Left colon (tissue), 2 donors: ENCODE measurements at regions of chr7 and their contacts with region 1.

Region 1: GRCh38 chr7:111741811-111742240 is 179.5 kb upstream of the IMMP2L start:
- DNase-seq: peak; percentile 41 to 63
- ATAC-seq: peak; percentile 92

Region 2: DNA sequence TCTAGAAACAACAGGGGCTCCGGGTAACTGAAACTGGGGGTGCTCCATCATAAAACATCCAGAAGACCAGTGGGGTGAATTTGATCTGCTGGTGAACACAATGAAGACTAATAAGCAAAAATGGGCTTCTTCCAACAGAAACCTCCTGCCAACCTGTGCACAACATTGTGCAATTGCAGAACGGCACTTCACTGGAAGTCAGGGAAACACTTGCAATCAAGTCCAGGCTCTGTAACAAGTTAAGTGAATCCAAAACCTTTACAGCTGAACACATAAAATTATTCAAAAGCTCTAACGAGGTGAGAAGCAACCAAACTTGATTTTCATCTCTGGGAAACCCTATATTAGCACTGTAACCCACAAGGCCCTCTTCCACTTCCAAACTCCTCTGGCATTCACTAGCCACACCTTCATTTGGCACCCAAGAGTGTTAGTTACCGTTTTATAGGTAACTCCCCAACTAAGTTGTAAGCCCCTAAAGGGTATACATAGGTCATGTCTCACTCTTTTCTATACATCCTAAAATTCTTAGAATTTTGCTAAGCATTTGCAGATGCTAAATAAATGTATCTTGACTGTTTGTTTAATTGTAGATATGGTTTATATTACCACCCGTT is 201.5 kb before region 1 on chr7:
- intact Hi-C with region 1: no loop called
- DNase-seq: no peak
- ATAC-seq: no peak

Region 3: GRCh38 chr7:111855161-111855856 is 113.5 kb after region 1 on chr7:
- intact Hi-C with region 1: loop called in 1 of 2 experiments (anchors 10 kb)
- DNase-seq: peak; percentile 56 to 64
- ATAC-seq: peak; percentile 91

Region 4: DNA sequence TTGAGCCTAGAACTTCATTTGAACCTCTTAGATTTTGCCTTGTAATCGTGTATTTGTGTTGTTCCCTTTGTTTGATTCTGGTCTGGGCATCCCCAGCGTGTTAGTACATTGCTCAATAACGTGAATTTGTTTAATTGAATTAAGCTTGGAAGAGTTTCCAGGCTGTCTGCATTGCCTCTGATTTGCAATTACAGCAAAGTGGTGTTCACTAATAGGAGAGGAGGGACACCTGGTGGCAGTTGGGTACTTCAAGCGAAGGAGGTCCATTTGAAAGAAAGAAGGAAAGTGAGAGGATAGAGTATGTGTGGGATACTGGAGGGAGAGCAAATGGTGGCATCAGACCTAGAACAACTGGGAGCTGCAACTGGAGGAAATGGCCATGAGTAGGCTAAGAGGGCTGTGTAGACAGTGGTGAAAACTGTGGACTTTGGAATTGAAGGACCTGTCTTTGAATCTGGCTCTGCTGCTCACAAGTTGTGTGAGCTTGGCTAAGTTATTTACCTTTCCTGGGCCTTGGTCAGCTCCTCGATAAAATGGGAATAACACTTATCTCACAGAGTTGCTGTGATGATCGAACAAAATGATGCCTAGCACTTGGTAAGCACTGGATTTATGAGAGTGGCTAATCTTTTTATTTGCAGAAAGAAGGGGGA is 754.1 kb after region 1 on chr7:
- intact Hi-C with region 1: loop called in 1 of 2 experiments (anchors 10 kb)
- DNase-seq: peak; percentile 41 to 44
- ATAC-seq: peak; percentile 80